H1 (cell line): ENCODE measurements at regions of chr3 and their contacts with region 1.

Region 1: GRCh38 chr3:9362731-9363530 is at the start of gene THUMPD3:
- DNase-seq: peak; percentile 84 to 92
- H3K4me3 ChIP-seq: peak within 1 kb of the TSS; percentile 52 to 82 (median 64)
- H3K27ac ChIP-seq: peak within 1 kb of the TSS; percentile 86
- H3K4me1 ChIP-seq: peaks cover 0 to 2% (median under 1%) of the 10 kb centered on the region in 4 experiments; a peak in 2 of 7 replicates
- H3K27me3 ChIP-seq: no peaks in the 10 kb centered on the region; a peak in 1 of 7 replicates
- CTCF ChIP-seq: no peak
- EP300 ChIP-seq: peak in 1 of 2 experiments; percentile 31; a peak in 1 of 3 replicates
- POLR2A ChIP-seq: peak; percentile 85 to 99
- RAD21 ChIP-seq: peak in 1 of 2 experiments; percentile 16; a peak in 2 of 4 replicates
- total RNA-seq, gene THUMPD3: 62.6 and 68.9 TPM in 2 replicates

Region 2: DNA sequence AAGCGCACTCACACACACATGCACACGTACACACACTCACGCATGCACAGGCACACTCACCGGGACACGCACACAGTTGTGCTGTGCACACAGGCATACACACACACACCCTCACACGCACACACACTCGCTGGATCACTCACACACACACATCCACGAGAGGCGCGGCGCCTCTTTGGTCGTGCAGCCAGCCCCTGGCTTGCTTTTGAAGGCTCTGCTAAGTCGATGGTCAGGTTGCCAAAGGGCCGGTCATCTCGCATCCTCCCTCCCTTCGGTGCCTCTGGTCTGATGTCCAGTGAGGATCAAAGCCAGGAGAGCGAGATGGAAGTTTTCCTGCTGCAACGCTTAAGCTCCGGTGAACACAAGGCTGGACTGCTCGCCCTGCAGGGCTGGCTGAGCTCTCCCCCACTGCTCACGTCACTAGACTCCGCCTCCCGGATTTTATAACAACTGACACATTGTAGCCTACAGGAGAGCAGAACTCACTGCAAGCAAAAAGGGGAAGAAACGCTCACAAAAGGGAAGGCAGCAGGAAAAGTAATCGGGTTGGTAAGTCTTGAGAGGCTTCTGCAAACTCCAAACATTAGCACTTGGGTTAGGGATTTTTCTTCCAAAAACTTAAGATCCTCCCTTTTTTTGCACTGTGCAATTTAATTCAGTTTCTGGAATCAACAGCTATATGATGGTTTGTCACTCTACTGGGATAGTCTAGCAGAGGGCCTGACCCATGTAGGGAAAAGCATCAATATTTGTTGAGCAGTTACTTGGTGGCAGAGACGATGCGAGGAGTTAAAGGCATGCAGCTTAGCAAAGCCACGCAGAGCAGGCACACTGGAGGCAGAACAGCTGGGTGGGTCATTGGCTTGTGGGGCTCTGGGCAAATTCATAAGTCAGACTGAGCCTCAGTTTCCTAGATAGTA is 113.4 kb before region 1 on chr3 and contains the start of gene SRGAP3:
- CTCF ChIA-PET with region 1: no interaction called
- POLR2A ChIA-PET with region 1: no interaction called
- DNase-seq: peak; percentile 54 to 87
- H3K4me3 ChIP-seq: peak within 1 kb of the TSS; percentile 59 to 74 (median 72)
- H3K27ac ChIP-seq: no peak within 1 kb of the TSS
- H3K4me1 ChIP-seq: peaks cover 7 to 23% (median 16%) of the 10 kb centered on the region in 4 experiments
- H3K27me3 ChIP-seq: no peaks in the 10 kb centered on the region; a peak in 1 of 7 replicates
- CTCF ChIP-seq: peak in 2 of 3 experiments; percentile 34 to 45; a peak in 2 of 4 replicates
- EP300 ChIP-seq: no peak
- POLR2A ChIP-seq: peak in 1 of 2 experiments; percentile 54; a peak in 2 of 3 replicates
- RAD21 ChIP-seq: peak; percentile 36 to 46
- total RNA-seq, gene SRGAP3: 9.4 and 11.4 TPM in 2 replicates

Region 3: GRCh38 chr3:9373465-9373864 is 10.5 kb after region 1 on chr3:
- CTCF ChIA-PET with region 1: interaction called, 3 read pairs
- POLR2A ChIA-PET with region 1: interaction called, 20 read pairs
- DNase-seq: no peak
- H3K4me3 ChIP-seq: no peak overlapping the region
- H3K27ac ChIP-seq: no peak overlapping the region
- H3K4me1 ChIP-seq: no peaks in the 10 kb centered on the region
- H3K27me3 ChIP-seq: no peaks in the 10 kb centered on the region
- CTCF ChIP-seq: no peak
- EP300 ChIP-seq: no peak
- POLR2A ChIP-seq: no peak
- RAD21 ChIP-seq: no peak

Region 4: DNA sequence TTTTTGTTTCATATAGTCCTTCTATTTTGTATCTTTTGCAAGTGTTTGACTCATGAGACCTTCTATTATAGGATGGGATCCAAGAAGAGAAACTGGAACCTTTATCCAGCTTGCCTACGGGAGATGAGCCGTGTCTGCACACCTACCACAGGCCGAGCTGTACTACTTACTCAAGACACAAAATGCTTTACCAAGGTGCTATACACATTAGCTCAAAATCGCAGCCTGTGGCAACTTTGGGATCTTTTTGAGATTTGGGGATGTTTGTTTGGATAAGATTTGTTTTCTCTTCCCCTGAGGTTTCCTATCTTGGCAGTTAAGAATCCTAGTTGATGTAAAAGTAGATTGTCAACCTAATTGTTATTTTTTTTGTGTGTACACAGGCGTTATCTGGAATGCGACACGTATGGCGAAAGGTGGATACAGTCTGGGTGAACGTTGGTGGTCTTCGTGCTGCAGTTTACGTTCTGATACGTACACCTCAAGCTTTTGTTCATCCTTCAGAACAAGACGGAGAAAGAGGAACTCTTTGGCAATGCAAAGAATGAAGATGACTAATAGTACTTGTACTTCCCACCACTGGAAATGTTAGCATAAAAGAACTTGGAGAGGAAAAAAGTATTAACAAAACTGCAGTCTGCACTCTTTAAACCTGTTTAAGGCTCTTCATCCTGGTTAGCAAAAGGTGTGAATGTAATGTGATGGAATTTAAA is 21.4 kb after region 1 on chr3:
- CTCF ChIA-PET with region 1: no interaction called
- POLR2A ChIA-PET with region 1: interaction called, 20 read pairs
- DNase-seq: no peak
- H3K4me3 ChIP-seq: no peak overlapping the region
- H3K27ac ChIP-seq: no peak overlapping the region
- H3K4me1 ChIP-seq: no peaks in the 10 kb centered on the region
- H3K27me3 ChIP-seq: no peaks in the 10 kb centered on the region
- CTCF ChIP-seq: no peak
- EP300 ChIP-seq: no peak
- POLR2A ChIP-seq: peak in 1 of 2 experiments; percentile 24; a peak in 1 of 3 replicates
- RAD21 ChIP-seq: no peak

Region 5: DNA sequence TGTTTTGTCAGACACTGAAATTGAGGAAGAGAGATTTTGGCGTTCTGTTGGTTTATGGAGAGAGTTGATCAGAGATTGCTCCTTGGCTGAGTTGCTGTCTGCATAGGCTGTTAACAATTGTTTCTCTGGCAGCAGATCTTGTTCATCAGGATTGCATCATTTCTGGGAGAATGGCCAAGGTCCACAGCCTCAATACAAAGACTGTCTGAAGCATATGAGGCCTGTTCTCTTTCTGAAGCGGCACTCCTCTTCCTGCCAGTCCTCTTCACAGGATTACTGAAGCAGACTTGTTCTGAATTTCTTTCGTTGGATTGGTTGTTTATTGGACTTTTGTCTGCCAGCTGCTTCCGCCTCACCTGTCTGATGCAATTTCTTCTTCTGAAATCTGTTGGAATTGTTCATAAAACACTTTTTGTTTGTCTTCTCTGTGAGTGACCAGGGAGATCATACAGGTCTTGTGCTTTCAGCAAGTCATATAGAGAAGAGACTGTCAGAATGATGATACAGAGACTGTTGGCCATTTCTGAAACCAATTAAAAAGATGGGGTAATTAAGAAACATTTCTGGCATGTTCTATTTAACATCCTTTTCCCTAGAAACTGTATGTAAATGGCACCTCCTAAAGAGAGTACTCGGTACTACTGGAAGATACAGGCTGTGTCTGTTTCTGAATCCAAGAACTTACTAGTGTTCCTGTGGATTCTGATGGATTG is 59.9 kb after region 1 on chr3:
- CTCF ChIA-PET with region 1: interaction called, 4 read pairs
- POLR2A ChIA-PET with region 1: interaction called, 12 read pairs
- DNase-seq: no peak
- H3K4me3 ChIP-seq: peak overlapping the region in 1 of 4 experiments; percentile 5; a peak in 1 of 8 replicates
- H3K27ac ChIP-seq: peak overlapping the region; percentile 76
- H3K4me1 ChIP-seq: peaks cover 3 to 7% (median 5%) of the 10 kb centered on the region in 4 experiments; a peak in 5 of 7 replicates
- H3K27me3 ChIP-seq: no peaks in the 10 kb centered on the region
- CTCF ChIP-seq: peak in 2 of 3 experiments; percentile 26 to 62; a peak in 2 of 4 replicates
- EP300 ChIP-seq: no peak
- POLR2A ChIP-seq: no peak
- RAD21 ChIP-seq: peak; percentile 69 to 71